ENCODE measurements at regions of chr6 and their contacts with region 1.

Region 1: GRCh38 chr6:63635588-63636517 is at the start of gene PHF3:
- DNase-seq: peak; percentile 95
- H3K4me3 ChIP-seq: peak within 1 kb of the TSS; percentile 76 to 93 (median 90)
- H3K27ac ChIP-seq: peak within 1 kb of the TSS; percentile 92 to 99 (median 96)
- H3K4me1 ChIP-seq: peaks cover 0 to 47% (median 38%) of the 10 kb centered on the region in 4 donors
- H3K27me3 ChIP-seq: no peaks in the 10 kb centered on the region
- CTCF ChIP-seq: peak in 1 of 4 experiments; percentile 18
- EP300 ChIP-seq: peak in 1 of 4 donors; percentile 5
- POLR2A ChIP-seq: peak in 1 of 2 donors; percentile 51
- total RNA-seq, gene PHF3: 59.6 to 80.5 (median 77.4) TPM

Region 2: DNA sequence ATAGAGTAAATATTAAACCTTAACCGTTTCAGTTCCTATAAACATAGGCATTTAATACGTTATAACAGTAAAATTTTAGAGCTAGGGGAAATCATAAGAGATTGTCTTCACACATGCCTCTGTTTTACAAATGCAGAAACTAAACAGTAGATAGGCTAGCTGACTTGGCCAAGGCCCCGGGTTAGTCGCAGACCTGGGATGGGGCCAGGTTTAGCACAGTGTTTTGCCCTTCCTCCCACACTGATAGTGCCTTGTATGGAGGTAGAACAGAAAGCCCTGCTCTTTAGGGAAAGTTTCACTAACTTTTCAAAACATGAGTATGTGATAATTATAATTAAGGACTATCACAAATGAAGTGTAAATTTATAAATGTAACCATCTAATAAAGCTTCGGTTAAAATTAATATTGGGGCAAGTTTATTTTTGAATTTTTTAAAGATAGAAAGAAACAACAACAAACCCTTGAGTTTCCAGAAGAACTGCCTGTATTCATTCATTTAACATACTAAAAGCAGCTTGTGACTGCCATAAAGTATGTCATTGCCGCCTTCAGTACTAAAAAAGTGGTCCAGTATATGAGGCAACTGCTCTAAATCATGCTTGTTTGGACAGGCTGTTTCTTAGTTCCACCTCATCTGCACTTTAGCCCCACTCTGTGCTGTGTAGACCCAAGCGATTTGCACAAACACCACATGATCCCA is 126.1 kb before region 1 on chr6:
- intact Hi-C with region 1: loop called (anchors 5 kb)
- DNase-seq: peak; percentile 92
- H3K4me3 ChIP-seq: peak overlapping the region in 1 of 4 donors; percentile 17
- H3K27ac ChIP-seq: peak overlapping the region; percentile 62 to 83 (median 76)
- H3K4me1 ChIP-seq: peaks cover 0 to 15% (median 4%) of the 10 kb centered on the region in 4 donors
- H3K27me3 ChIP-seq: no peaks in the 10 kb centered on the region
- CTCF ChIP-seq: no peak
- EP300 ChIP-seq: peak; percentile 22 to 82 (median 64)
- POLR2A ChIP-seq: no peak

Region 3: DNA sequence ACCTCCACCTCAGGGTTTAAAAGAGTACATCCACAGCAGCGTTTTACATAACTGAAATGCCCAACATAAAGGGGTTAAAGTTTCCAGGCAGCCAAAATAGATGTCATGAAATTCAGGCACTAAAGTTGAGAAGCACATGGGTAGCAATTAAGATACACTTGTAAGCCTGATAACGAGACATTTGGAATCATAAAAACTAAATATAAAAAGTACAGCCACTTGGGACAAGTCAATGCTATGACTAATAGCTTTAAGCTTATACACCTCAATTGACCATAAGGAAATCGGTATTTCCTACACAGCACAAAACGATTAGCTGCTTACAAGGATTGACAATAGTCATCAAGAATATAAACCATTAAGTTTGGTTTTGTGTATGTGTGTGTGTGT is 51.7 kb before region 1 on chr6:
- intact Hi-C with region 1: no loop called
- DNase-seq: no peak
- H3K4me3 ChIP-seq: no peak overlapping the region
- H3K27ac ChIP-seq: no peak overlapping the region
- H3K4me1 ChIP-seq: no peaks in the 10 kb centered on the region
- H3K27me3 ChIP-seq: no peaks in the 10 kb centered on the region
- CTCF ChIP-seq: no peak
- EP300 ChIP-seq: no peak
- POLR2A ChIP-seq: no peak

Region 4: GRCh38 chr6:63598049-63599036 is 37.5 kb before region 1 on chr6:
- intact Hi-C with region 1: loop called (anchors 1 kb)
- DNase-seq: peak; percentile 80
- H3K4me3 ChIP-seq: peak overlapping the region; percentile 27 to 47 (median 40)
- H3K27ac ChIP-seq: peak overlapping the region in 1 of 4 donors; percentile 10
- H3K4me1 ChIP-seq: peaks cover 0 to 7% (median 5%) of the 10 kb centered on the region in 4 donors
- H3K27me3 ChIP-seq: no peaks in the 10 kb centered on the region
- CTCF ChIP-seq: peak; percentile 82 to 88 (median 84)
- EP300 ChIP-seq: no peak
- POLR2A ChIP-seq: no peak

Region 5: DNA sequence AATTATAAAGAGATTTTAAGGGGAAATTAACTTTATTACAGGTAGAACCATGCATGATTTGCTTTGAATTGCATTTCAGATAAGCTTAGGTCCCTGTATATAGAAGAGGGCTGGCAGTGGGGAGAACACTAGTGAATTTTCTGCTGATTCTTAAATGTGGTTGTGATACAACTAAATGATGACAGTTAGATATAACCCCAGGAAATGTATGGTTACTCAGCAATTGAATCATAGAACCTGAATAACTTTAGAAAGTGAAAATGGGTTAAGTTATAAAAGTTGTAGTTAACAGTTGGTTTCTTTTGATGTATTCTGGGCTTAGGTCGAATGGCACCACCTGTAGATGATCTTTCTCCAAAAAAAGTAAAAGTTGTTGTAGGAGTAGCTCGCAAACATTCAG is 69.9 kb after region 1 on chr6:
- intact Hi-C with region 1: loop called (anchors 10 kb)
- DNase-seq: no peak
- H3K4me3 ChIP-seq: no peak overlapping the region
- H3K27ac ChIP-seq: no peak overlapping the region
- H3K4me1 ChIP-seq: no peaks in the 10 kb centered on the region
- H3K27me3 ChIP-seq: no peaks in the 10 kb centered on the region
- CTCF ChIP-seq: no peak
- EP300 ChIP-seq: no peak
- POLR2A ChIP-seq: no peak